ENCODE measurements at regions of chr22 and their contacts with region 1.

Region 1: GRCh38 chr22:50341977-50342650 is 1.0 kb upstream of the PPP6R2 start:
- DNase-seq: peak; percentile 92
- H3K4me3 Mint-ChIP-seq: peak overlapping the region; percentile 72
- H3K27ac Mint-ChIP-seq: peak overlapping the region; percentile 83
- H3K4me1 Mint-ChIP-seq: peaks cover 10% of the 10 kb centered on the region
- H3K27me3 Mint-ChIP-seq: no peaks in the 10 kb centered on the region

Region 2: DNA sequence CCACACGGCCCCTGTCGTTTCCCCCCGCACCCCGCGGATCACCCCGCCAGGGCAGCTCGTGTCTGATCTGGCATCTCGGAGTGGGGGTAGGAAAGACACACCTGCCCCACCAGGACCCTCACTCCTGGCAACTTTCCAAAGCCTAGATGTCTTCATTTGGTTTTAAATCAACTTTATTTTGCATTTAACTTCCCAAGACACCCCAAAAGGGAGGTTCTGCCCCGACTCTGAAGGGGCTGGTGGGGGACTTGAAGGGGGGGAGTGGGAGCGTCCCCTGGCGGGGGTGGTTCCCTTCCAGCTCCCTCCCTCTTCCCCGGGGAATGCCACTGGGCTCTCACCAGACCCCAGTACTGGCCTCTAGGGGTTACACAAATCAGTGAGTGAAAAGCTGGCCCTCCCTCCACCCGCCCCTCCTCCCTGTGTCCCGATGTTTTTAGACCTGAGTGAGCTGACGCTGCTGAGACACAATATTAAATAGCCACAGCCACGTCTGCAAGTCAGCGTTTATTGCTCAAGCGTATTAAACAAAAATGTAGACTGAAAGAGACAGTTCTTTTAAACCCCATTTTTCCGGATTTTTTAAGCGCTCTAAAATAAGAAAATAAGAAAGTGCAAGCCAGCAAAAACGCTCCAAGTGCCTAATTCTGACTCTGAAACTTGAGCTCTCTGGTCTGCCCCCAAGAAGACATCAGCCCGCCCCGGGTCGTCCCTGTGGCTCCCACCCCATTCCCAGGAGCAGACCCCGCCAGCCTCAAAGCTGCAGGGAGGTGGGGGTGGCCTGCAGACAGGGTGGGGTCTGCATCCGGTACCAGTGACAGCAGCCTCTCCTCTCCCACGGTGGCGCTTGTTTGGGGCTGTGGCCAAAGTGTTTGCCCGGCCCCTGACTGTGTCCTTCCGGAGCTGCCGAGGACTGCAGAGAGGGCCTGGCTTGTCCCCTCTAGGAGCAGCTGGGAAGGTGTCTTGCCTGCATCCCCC is 282.9 kb before region 1 on chr22:
- CTCF ChIA-PET with region 1: no interaction called
- POLR2A ChIA-PET with region 1: no interaction called
- intact Hi-C with region 1: no loop called
- DNase-seq: no peak
- H3K4me3 Mint-ChIP-seq: no peak overlapping the region
- H3K27ac Mint-ChIP-seq: no peak overlapping the region
- H3K4me1 Mint-ChIP-seq: no peaks in the 10 kb centered on the region
- H3K27me3 Mint-ChIP-seq: peaks cover 34% of the 10 kb centered on the region

Region 3: DNA sequence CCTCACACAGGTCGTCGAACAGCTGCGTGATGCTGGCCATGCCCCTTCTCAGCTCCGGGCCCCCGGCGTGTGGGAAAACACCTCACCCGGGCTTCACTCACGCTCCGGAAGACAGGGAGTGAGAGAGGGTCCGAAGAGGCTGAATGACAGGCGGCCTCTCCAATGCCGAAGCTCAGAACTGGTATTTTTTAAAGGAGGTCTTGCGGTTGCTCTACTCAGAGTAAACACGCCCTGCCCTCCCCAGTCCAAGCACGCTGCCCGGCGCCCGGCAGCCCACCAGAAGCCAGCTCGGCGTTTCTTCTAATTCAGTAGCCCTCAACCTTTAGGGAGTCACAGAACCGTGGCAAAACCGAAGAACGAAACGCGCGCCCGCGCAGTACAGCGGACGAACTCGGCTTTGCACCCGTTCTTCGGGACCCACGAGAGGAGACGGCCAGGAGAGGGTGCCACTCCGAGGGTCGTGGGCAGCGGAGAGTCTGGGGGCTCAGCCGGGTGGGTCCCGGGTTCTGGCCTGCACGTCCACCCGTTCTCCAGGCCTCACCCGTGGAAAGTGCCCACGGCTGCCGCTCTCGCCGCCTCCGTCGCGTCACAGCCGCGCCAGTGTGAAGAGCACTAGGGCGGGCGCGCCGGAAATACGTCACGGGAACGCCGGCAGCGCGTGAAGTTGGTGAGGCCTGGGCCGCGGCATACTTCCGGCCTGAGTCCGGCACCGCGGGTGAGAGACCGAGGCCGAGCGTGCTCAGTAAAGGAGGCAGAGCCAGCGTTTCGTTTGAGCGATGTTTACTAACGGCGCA is 97.5 kb before region 1 on chr22 and contains the start of gene TUBGCP6:
- CTCF ChIA-PET with region 1: interaction called, 34 read pairs
- POLR2A ChIA-PET with region 1: interaction called, 5 read pairs
- intact Hi-C with region 1: loop called (anchors 2 kb)
- DNase-seq: peak; percentile 95
- H3K4me3 Mint-ChIP-seq: peak within 1 kb of the TSS; percentile 91
- H3K27ac Mint-ChIP-seq: peak within 1 kb of the TSS; percentile 90
- H3K4me1 Mint-ChIP-seq: peaks cover 41% of the 10 kb centered on the region
- H3K27me3 Mint-ChIP-seq: no peaks in the 10 kb centered on the region
- total RNA-seq, gene TUBGCP6: 41.4 to 43.8 TPM

Region 4: GRCh38 chr22:50270666-50271394 is 71.3 kb before region 1 on chr22:
- CTCF ChIA-PET with region 1: interaction called, 13 read pairs
- POLR2A ChIA-PET with region 1: no interaction called
- intact Hi-C with region 1: loop called (anchors 1 kb)
- DNase-seq: peak; percentile 81
- H3K4me3 Mint-ChIP-seq: peak overlapping the region; percentile 64
- H3K27ac Mint-ChIP-seq: no peak overlapping the region
- H3K4me1 Mint-ChIP-seq: peaks cover 8% of the 10 kb centered on the region
- H3K27me3 Mint-ChIP-seq: no peaks in the 10 kb centered on the region

Region 5: GRCh38 chr22:50326959-50327710 is 15.0 kb before region 1 on chr22 and contains the start of gene DENND6B:
- CTCF ChIA-PET with region 1: interaction called, 33 read pairs
- POLR2A ChIA-PET with region 1: interaction called, 5 read pairs
- intact Hi-C with region 1: loop called (anchors 2 kb)
- DNase-seq: peak; percentile 74
- H3K4me3 Mint-ChIP-seq: peak within 1 kb of the TSS; percentile 73
- H3K27ac Mint-ChIP-seq: no peak within 1 kb of the TSS
- H3K4me1 Mint-ChIP-seq: peaks cover 10% of the 10 kb centered on the region
- H3K27me3 Mint-ChIP-seq: peaks cover 7% of the 10 kb centered on the region
- total RNA-seq, gene DENND6B: 3.5 to 3.6 TPM

Region 6: DNA sequence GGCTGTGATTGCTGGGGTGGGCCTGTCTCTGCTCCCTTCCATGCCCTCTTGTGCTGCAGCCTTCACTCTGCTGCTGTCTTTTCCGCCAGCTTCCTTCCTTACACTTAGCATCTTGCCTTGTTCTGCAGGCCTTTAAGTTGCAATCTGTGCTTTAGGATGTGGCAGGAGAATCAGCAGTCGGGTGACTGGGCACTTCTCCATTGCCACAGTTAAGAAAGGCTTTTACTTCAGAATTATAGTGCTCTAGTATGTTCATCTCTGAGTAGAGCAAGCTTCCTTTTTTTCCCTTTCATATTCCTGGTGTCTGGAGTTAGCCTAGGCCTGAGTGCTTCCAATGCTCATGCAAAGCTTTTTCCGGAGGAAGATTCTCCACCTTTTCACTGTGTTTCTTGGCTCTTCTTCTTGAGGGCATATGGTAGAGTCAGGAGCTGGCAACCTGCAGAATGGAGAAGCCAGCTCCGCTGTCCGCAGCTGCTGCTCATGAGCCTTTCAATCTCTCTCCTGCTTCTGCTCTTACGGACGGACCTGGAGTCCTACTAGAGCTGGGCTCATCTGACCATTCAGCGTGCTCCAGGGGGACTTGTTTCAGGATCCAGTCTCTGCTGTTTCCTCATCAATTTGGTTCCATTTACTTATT is 21.2 kb after region 1 on chr22:
- CTCF ChIA-PET with region 1: no interaction called
- POLR2A ChIA-PET with region 1: no interaction called
- intact Hi-C with region 1: no loop called
- DNase-seq: no peak
- H3K4me3 Mint-ChIP-seq: no peak overlapping the region
- H3K27ac Mint-ChIP-seq: no peak overlapping the region
- H3K4me1 Mint-ChIP-seq: peaks cover 31% of the 10 kb centered on the region
- H3K27me3 Mint-ChIP-seq: no peaks in the 10 kb centered on the region

Measured in activated CD4-positive, alpha-beta memory T cell treated with anti-CD3 and anti-CD28 coated beads for 36 hours (primary cell).